ENCODE measurements at regions of chr15 and their contacts with region 1.

Region 1: GRCh38 chr15:23642413-23643044 is 5.1 kb downstream of the MAGEL2 start:
- DNase-seq: peak; percentile 69
- H3K4me3 ChIP-seq: no peak overlapping the region
- H3K27ac ChIP-seq: no peak overlapping the region
- H3K4me1 ChIP-seq: no peaks in the 10 kb centered on the region
- H3K27me3 ChIP-seq: no peaks in the 10 kb centered on the region
- CTCF ChIP-seq: peak; percentile 83

Region 2: DNA sequence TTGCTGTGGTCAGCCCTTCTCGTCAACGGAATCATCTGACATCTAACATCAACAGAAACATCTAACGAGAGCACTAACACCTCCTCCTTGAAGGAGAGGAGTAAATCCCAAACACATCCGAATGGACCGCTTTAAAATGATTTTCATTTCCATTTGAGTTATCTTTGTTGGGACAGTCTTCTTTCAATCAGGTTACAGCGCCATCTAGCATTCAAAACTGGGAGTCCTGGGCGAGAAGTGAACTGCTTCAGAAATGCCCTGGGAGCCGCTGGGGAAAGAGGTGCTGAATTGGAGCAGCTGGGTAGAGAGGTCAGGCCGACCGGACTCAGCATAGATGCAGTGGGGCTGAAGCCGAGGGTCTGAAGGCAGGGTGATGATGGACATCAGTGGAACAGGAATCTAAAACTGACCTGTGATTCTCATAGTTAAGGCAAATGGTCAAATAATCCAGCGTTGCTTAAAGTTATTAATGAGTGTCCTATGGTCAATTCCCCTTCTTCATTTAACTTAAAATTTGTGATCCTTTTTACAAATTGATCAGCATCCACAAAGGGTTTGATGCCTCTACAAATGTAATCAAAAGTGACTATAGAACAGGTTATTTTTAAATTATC is 214.6 kb after region 1 on chr15:
- CTCF ChIA-PET with region 1: no interaction called
- POLR2A ChIA-PET with region 1: no interaction called
- intact Hi-C with region 1: loop called (anchors 10 kb)
- DNase-seq: peak; percentile 20
- H3K4me3 ChIP-seq: no peak overlapping the region
- H3K27ac ChIP-seq: no peak overlapping the region
- H3K4me1 ChIP-seq: no peaks in the 10 kb centered on the region
- H3K27me3 ChIP-seq: no peaks in the 10 kb centered on the region
- CTCF ChIP-seq: peak; percentile 37

Region 3: DNA sequence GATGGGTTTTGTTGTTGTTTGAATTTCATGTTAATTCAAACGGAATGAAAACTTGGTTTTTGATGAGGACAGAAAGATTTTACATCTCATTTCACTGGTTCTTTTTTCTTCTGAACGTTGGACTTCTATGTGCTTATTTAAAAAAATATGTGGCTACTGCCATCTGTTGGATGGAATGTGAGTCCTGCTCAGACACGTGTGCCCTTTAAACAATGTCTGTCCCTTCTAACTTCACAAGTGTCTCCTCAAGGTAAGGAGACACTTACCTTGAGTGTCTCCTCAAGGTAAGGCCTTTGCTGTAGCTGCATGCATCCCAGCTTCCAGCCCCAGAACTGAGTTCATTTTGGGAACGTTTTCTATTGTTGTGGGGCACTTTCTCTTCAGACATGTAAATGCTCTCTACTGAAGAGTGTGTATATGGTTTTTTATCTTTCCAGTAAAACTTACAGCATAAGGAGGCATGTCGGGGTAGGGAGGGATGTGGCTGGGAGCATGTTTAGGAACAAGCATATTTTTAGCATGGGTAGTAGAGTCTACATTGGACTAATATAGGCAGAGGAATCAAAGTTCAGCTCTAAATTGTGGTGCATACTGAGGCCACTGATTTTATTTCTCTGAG is 1859.4 kb after region 1 on chr15:
- CTCF ChIA-PET with region 1: no interaction called
- POLR2A ChIA-PET with region 1: no interaction called
- intact Hi-C with region 1: loop called (anchors 5 kb)
- DNase-seq: peak; percentile 37
- H3K4me3 ChIP-seq: no peak overlapping the region
- H3K27ac ChIP-seq: no peak overlapping the region
- H3K4me1 ChIP-seq: no peaks in the 10 kb centered on the region
- H3K27me3 ChIP-seq: no peaks in the 10 kb centered on the region
- CTCF ChIP-seq: peak; percentile 45; the same call in 1 of the 2 replicates